Endothelial cell of umbilical vein (primary cell): ENCODE measurements at regions of chr7 and their contacts with region 1.

Region 1: DNA sequence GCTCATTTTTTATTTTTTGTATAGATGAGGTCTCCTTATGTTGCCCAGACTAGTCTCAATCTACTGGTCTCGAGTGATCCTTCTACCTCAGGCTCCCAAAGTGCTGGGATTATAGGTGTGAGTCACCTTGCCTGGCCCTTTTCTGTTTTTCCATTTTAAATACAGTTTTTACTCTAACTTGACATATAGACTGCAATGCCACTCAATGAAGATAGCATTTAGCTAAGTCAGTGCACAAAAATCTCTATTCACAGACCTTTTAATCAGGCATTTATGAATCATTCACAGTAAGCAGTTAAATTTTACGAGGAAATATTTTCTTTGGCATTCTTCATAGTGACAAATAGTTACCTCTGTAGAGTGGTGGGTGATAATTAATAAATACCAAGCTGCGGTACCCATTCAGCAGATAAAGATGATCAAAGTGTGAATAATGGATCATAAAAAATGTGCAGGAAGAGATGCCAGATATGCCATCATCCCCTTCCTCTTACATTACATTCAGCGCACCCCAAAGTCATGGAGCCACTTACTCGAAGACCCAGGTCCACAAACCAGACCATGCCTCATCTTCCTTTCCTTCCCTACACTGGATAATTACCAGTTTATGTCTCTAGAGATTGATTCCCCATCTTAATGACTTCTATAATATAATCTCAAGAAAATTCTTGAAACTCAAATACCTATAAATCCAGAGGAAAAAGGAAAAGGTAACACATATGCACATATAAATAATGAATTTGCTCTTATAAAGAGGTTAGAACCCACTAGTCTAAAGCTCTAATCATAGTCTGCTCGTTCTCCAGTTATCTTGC is 56.0 kb downstream of the UBE2H start:
- DNase-seq: peak; percentile 59
- H3K4me3 ChIP-seq: no peak overlapping the region
- H3K27ac ChIP-seq: peak overlapping the region; percentile 55
- H3K4me1 ChIP-seq: peaks cover 16% of the 10 kb centered on the region
- H3K27me3 ChIP-seq: no peaks in the 10 kb centered on the region
- CTCF ChIP-seq: no peak
- POLR2A ChIP-seq: no peak

Region 2: DNA sequence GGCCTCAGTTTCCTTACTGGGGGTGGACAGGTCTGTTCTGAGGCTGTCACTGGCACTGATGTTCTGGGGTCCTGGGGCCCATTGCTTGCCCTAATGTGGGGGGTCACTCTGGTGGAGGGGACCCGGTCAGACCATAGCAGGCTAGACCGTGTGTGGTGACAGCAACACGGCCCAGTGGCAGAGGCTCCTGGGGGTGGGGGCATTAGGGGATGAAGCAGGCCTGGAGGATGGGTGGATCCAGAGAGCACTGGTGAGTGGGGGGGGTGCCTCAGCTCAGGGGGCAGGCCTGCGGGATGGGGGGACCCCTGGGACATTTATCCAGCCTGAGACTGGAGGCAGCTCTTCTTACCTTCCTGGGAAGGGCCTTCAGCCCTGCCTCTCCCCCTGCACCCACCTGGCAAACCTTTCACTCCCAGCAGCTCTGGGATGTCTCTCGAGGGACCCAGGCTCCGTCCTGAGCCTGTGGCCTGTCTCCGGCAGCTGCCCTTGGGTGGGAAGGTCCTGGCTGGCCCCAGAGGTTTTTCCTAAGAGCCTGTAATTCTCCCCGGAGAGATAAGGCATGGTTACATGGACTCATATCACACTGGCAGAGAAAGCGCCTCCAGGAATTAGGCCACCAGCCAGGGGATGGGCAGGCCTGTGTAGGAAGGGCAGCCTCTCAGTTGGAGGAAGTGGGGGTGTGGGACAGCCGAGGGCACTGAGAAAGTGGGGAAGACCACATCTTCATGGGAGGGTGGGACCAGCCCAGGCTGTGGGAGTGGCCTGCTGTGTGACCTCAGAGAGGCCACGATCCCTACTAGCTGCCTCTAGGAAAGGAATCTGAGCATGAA is 91.7 kb before region 1 on chr7:
- CTCF ChIA-PET with region 1: no interaction called
- POLR2A ChIA-PET with region 1: no interaction called
- dilution Hi-C with region 1: no loop called
- intact Hi-C with region 1: no loop called
- DNase-seq: no peak
- H3K4me3 ChIP-seq: no peak overlapping the region
- H3K27ac ChIP-seq: no peak overlapping the region
- H3K4me1 ChIP-seq: no peaks in the 10 kb centered on the region
- H3K27me3 ChIP-seq: peaks cover 0 to 3% of the 10 kb centered on the region in 2 experiments
- CTCF ChIP-seq: no peak
- POLR2A ChIP-seq: no peak

Region 3: DNA sequence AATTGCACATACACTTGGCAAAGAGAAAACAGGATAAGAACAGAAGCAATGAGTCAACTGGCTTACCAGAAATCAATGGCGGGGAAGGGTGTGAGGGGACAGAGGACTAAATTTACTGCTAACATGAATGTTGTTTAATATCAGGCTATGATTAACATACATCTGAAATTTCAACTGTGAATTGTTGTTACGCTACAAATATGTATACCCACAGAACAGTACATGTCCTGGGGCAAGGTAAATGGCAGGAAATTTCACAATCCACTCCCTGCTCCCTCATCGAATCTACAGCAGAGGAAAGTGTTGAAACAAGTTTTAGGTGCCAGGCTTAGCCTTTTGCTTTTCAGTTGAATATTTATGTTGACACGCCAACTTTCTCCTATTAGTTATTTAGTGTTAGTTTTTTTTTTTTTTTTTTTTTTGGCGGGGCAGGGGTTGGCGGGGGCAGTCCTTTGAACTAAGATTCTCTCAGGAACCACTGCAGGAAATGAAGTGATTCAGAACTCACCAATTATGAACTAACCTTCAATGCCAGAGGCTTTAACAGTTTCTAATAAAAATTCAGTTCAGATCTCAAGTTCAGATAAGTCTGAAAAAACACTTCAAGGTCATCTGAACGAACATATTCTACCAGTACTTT is 43.0 kb before region 1 on chr7:
- CTCF ChIA-PET with region 1: interaction called, 4 read pairs
- POLR2A ChIA-PET with region 1: no interaction called
- dilution Hi-C with region 1: no loop called
- intact Hi-C with region 1: loop called (anchors 5 kb)
- DNase-seq: peak; percentile 55
- H3K4me3 ChIP-seq: peak overlapping the region in 1 of 3 experiments; percentile 45
- H3K27ac ChIP-seq: peak overlapping the region; percentile 72
- H3K4me1 ChIP-seq: peaks cover 23% of the 10 kb centered on the region
- H3K27me3 ChIP-seq: no peaks in the 10 kb centered on the region
- CTCF ChIP-seq: no peak
- POLR2A ChIP-seq: peak; percentile 20

Region 4: DNA sequence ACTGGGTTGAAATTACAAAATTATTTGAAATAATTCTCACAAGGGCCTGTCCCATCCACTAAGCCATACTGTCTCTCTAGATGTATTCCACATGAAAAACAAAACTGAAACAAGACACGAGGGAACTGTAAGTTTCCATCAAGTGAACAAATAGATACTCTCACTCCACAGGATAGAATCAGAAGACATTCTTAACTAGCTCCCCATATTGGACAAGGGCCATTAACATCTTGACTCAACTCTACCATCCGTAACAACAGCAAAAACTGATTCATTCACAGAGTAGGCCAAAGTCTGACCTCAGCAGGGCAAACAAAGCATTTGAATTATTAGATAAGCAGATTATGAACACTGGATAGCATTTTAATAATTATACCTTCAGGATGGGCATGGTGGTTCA is 26.9 kb after region 1 on chr7:
- CTCF ChIA-PET with region 1: interaction called, 11 read pairs
- POLR2A ChIA-PET with region 1: no interaction called
- dilution Hi-C with region 1: no loop called
- intact Hi-C with region 1: no loop called
- DNase-seq: peak; percentile 81
- H3K4me3 ChIP-seq: no peak overlapping the region
- H3K27ac ChIP-seq: peak overlapping the region; percentile 37
- H3K4me1 ChIP-seq: peaks cover 30% of the 10 kb centered on the region
- H3K27me3 ChIP-seq: no peaks in the 10 kb centered on the region
- CTCF ChIP-seq: no peak
- POLR2A ChIP-seq: no peak